ENCODE measurements at regions of chr2 and their contacts with region 1.

Region 1: GRCh38 chr2:27050281-27050995 is 1.0 kb upstream of the AGBL5 start:
- DNase-seq: peak; percentile 95
- ATAC-seq: peak; percentile 73
- H3K4me3 Mint-ChIP-seq: peak overlapping the region; percentile 90
- H3K27ac Mint-ChIP-seq: peak overlapping the region; percentile 98
- H3K4me1 Mint-ChIP-seq: peaks cover 18% of the 10 kb centered on the region
- H3K27me3 Mint-ChIP-seq: peaks cover 4% of the 10 kb centered on the region

Region 2: DNA sequence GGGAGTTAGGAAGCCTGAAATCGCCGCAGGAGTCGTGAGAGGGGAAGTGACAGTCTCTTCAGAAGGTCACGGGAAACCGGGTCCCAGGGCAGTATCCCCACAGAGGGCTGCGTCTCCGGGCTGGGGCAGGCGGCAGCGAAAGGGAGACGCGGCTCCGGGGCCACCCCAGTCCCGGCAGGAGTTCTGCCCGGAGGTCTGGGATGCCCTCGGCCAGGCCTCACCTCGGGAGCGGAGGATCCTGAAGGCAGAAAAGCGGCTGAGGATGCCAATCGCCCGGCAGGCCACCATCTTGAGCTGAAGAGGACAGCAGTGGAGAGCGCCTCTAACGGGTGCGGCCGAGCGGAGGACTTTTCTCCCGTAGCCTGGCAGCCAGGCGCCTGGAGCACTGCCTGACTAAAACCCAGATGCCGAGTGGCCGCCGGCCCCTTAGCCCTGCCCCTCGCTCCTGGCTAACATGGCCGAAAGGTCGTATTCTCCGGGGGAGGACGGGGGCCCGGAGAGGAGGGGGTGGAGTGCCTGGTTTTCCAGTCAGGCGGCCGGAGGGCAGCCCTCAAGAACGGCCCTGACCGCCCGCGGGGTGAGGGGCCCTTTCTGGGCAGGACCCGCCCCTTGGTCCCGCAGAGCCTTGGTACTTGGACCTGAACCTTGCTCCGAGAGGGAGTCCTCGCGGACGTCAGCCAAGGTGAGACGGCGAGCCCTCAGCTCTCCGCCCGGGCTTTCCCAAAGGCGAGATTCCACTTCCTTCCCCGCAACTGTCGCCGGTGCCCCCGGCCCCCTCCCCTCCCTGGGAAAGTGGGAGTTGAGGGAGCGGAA is 805.9 kb before region 1 on chr2 and contains the starts of genes HADHA and HADHB:
- CTCF ChIA-PET with region 1: no interaction called
- POLR2A ChIA-PET with region 1: no interaction called
- intact Hi-C with region 1: loop called in 1 of 2 experiments (anchors 1 kb)
- DNase-seq: peak; percentile 90
- ATAC-seq: peak; percentile 80
- H3K4me3 Mint-ChIP-seq: peak within 1 kb of the TSS; percentile 99
- H3K27ac Mint-ChIP-seq: peak within 1 kb of the TSS; percentile 98
- H3K4me1 Mint-ChIP-seq: peaks cover 47% of the 10 kb centered on the region
- H3K27me3 Mint-ChIP-seq: no peaks in the 10 kb centered on the region
- total RNA-seq, gene HADHA: 149 to 154 TPM
- total RNA-seq, gene HADHB: 71.4 to 73.4 TPM

Region 3: DNA sequence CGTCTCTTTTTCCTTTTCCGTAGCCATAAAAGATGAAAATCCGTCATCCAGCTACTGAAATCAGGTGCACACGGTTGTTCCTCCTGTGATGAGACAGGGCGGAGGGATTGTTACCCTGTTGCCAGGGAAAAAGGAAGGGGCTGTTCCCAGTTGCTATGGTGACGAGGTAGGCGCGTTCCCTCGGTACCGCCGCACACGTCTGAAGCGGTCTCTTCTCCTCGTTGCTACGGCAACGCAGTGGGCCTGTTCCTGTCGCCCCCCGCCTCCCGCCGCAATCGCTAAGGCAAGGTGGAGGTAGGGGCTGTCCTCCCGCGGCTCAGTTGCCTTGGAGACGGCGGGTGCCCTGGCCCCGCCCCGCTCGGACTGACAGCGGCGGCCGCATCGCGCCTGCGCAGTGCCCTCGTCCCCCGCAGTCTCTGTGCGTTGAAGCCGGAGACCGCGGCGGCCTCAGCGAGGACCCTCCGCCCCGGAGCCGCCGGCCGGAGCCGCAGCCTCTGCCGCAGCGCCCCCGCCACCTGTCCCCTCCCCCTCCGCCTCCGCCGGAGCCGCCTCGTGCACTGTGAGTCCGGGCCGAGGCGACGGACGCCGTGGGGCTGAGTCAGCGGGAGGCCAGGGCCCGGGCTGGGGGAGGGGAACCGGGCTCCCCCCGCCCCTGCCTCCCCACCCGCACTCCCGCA is 80.1 kb before region 1 on chr2 and contains the start of gene MAPRE3:
- CTCF ChIA-PET with region 1: no interaction called
- POLR2A ChIA-PET with region 1: no interaction called
- intact Hi-C with region 1: loop called in 1 of 2 experiments (anchors 1 kb)
- DNase-seq: peak; percentile 86
- ATAC-seq: peak; percentile 93
- H3K4me3 Mint-ChIP-seq: peak within 1 kb of the TSS; percentile 72
- H3K27ac Mint-ChIP-seq: peak within 1 kb of the TSS; percentile 5
- H3K4me1 Mint-ChIP-seq: peaks cover 15% of the 10 kb centered on the region
- H3K27me3 Mint-ChIP-seq: peaks cover 11% of the 10 kb centered on the region
- total RNA-seq, gene MAPRE3: 3.2 to 4.1 TPM

Region 4: GRCh38 chr2:27086090-27086723 is 35.8 kb after region 1 on chr2:
- CTCF ChIA-PET with region 1: interaction called, 30 read pairs
- POLR2A ChIA-PET with region 1: interaction called, 6 read pairs
- intact Hi-C with region 1: loop called (anchors 1 kb)
- DNase-seq: peak; percentile 98
- ATAC-seq: peak; percentile 89
- H3K4me3 Mint-ChIP-seq: peak overlapping the region; percentile 77
- H3K27ac Mint-ChIP-seq: peak overlapping the region; percentile 82
- H3K4me1 Mint-ChIP-seq: peaks cover 24% of the 10 kb centered on the region
- H3K27me3 Mint-ChIP-seq: no peaks in the 10 kb centered on the region

Region 5: GRCh38 chr2:27217217-27218121 is 167.0 kb after region 1 on chr2 and contains the start of gene CAD:
- CTCF ChIA-PET with region 1: no interaction called
- POLR2A ChIA-PET with region 1: no interaction called
- intact Hi-C with region 1: loop called in 1 of 2 experiments (anchors 1 kb)
- DNase-seq: peak; percentile 94
- ATAC-seq: peak; percentile 90
- H3K4me3 Mint-ChIP-seq: peak within 1 kb of the TSS; percentile 93
- H3K27ac Mint-ChIP-seq: peak within 1 kb of the TSS; percentile 87
- H3K4me1 Mint-ChIP-seq: peaks cover 37% of the 10 kb centered on the region
- H3K27me3 Mint-ChIP-seq: no peaks in the 10 kb centered on the region
- total RNA-seq, gene CAD: 107 to 147 TPM

Region 6: GRCh38 chr2:27233341-27233740 is 182.9 kb after region 1 on chr2:
- CTCF ChIA-PET with region 1: no interaction called
- POLR2A ChIA-PET with region 1: no interaction called
- intact Hi-C with region 1: no loop called
- DNase-seq: no peak
- ATAC-seq: no peak
- H3K4me3 Mint-ChIP-seq: no peak overlapping the region
- H3K27ac Mint-ChIP-seq: no peak overlapping the region
- H3K4me1 Mint-ChIP-seq: no peaks in the 10 kb centered on the region
- H3K27me3 Mint-ChIP-seq: no peaks in the 10 kb centered on the region

Region 7: DNA sequence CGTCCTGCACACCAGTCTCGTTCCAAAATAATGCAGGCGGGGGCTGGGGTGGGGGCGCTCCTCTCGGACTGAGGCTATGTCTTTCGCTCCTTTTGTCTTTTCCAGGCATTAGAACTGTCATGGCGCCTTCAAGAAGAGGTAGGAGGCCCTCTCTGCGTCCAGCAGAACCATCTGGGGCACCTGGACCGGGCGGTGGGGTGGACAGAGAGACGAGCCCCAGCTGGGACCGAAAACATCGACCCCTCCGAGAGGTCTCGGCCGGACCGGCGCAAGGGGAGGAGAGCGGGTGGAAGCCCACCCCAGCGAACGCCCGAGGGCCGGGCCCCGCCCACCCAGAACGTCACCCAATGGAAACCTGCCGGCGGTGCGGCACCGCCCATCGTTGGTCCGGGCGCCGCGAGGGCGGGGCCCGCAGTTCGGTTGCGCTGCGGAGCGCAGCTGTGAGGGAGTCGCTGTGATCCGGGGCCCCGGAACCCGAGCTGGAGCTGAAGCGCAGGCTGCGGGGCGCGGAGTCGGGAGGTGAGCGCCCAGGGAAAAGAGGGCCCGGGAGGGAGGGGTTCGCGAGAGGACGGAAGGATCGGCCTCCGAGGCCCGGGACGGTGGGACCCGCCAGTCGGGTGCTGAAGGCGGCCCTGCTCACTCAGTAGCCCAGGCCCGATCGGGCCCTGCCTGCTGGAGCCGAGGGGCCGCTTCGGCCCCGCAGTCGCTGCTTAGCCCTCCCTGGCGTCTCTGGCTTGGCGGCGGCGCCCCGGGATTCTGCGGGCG is 378.0 kb after region 1 on chr2 and contains the start of gene NRBP1:
- CTCF ChIA-PET with region 1: no interaction called
- POLR2A ChIA-PET with region 1: no interaction called
- intact Hi-C with region 1: loop called in 1 of 2 experiments (anchors 2 kb)
- DNase-seq: peak; percentile 97
- ATAC-seq: peak; percentile 85
- H3K4me3 Mint-ChIP-seq: peak within 1 kb of the TSS; percentile 100
- H3K27ac Mint-ChIP-seq: peak within 1 kb of the TSS; percentile 98
- H3K4me1 Mint-ChIP-seq: peaks cover 37% of the 10 kb centered on the region
- H3K27me3 Mint-ChIP-seq: no peaks in the 10 kb centered on the region
- total RNA-seq, gene NRBP1: 74.3 to 74.4 TPM